ENCODE measurements at regions of chr9 and their contacts with region 1.

Region 1: GRCh38 chr9:105157130-105157583 is 87.3 kb upstream of the SLC44A1 start:
- DNase-seq: peak; percentile 46 to 78 (median 70)
- ATAC-seq: peak; percentile 83 to 95 (median 90)
- H3K4me3 ChIP-seq: no peak overlapping the region
- H3K27ac ChIP-seq: peak overlapping the region in 1 of 12 donors; percentile 43
- H3K4me1 ChIP-seq: peaks cover 0 to 16% (median 0%) of the 10 kb centered on the region in 12 donors
- H3K27me3 ChIP-seq: no peaks in the 10 kb centered on the region
- CTCF ChIP-seq: peak; percentile 30 to 72 (median 55)
- POLR2A ChIP-seq: no peak

Region 2: DNA sequence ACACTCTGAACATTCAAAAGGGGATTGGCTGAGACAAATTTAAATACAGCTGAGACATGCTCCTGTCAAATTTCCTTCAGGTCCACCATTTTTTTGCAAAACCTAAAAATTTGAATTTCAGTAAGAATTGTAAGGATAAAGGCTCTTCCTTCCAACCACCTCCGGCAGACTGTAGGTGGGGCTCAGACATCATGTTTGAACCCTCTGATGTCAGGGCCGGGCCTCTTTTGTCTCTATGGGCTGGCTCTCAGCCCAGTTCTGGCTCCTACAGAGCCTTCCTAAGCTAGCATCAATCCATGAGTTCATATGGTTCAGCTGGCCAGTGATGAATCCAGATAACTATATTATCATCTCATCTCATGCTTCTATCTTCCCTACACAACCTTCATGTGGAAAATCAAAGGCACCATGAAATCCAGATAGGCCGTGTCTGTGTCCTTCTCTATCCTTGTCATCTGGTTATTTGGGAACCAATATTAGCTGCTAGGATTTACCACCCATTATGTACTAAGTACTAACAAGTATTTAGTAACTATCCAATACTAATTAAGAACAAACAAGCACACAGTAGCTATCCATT is 349.0 kb before region 1 on chr9:
- intact Hi-C with region 1: loop called in 1 of 10 experiments (anchors 10 kb)
- DNase-seq: peak in 3 of 5 donors; percentile 27 to 45 (median 36)
- ATAC-seq: peak; percentile 29 to 75 (median 69)
- H3K4me3 ChIP-seq: no peak overlapping the region
- H3K27ac ChIP-seq: no peak overlapping the region
- H3K4me1 ChIP-seq: peaks cover 0 to 9% (median 0%) of the 10 kb centered on the region in 12 donors
- H3K27me3 ChIP-seq: no peaks in the 10 kb centered on the region
- CTCF ChIP-seq: peak in 10 of 12 donors; percentile 15 to 57 (median 40)
- POLR2A ChIP-seq: no peak

Region 3: DNA sequence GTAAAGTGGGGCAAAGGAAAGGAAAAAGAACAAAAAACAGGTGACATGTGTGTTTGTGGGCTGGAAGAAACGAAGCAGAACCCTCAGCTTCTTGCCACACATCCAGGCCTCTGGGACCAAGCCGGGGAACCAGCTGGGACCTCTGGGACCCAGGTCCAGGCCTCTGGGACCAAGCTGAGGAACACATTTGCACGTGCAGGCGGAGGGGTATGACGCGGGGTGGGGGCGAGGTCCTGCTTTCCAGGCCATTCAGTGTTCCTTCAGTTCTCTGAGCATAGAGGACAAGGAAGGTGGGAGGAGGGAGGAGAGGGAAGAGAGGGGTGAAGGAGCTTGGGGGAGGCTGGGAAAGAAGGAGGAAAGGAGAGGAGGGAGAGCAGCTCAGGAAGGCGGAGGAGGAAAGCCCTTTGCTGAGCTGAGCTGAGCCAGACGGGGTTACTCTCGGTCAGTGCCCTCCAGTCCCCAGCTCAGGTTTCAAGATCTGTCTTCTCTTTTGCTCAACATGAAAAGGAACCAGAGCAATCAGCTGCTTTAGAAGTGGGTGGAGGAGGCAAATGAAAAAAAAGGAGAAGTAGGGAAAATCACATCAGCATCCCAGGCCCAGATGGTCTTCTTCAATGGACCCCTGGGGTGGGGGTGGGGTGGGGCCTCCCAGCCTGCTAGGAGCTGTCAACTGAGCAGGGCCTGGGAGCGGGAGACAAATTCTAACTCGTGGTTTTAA is 288.3 kb before region 1 on chr9:
- intact Hi-C with region 1: loop called in 6 of 10 experiments (anchors 2 to 5 kb)
- DNase-seq: peak; percentile 67 to 79 (median 72)
- ATAC-seq: peak; percentile 89 to 93 (median 92)
- H3K4me3 ChIP-seq: no peak overlapping the region
- H3K27ac ChIP-seq: peak overlapping the region in 11 of 12 donors; percentile 36 to 81 (median 64)
- H3K4me1 ChIP-seq: peaks cover 8 to 70% (median 47%) of the 10 kb centered on the region in 12 donors
- H3K27me3 ChIP-seq: no peaks in the 10 kb centered on the region
- CTCF ChIP-seq: no peak
- POLR2A ChIP-seq: no peak

Region 4: DNA sequence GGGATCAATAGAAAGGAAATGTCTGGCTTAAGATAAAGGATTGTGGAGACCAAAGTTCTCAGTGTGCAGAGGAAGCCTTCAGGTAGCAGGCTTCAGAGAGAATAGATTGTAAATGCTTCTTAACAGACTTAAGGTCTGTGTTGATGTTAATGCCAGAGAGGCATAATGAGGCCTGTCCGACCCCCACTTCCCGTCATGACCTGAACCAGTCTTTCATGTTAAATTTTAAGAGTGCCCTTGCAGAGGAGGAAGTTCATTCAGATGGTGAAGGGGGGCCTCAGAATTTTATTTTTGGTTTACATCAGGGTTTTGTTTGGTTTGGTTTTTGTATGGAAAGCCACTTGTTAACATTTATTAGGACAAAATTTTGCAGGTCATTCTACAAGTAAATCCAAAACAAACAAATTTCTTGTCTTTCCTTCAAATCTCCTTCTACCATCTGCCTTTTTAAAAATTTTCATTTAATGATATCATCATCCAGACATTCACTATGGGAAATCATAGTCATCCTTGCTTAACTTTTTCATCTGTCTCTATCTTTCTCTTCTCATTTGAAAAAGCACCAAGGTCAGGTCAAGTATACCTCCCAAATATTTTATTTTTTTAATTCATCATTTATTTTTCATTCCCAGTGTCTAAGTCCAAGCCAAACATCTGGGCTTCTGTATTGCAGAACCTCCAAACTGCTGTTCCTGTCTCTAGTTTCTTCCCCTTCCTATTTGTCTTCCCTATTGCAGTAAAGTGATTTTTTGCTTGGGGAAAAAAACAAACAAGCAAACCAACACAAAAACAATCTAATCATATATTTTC is 222.3 kb before region 1 on chr9:
- intact Hi-C with region 1: no loop called
- DNase-seq: no peak
- ATAC-seq: peak in 1 of 4 donors; percentile 57
- H3K4me3 ChIP-seq: no peak overlapping the region
- H3K27ac ChIP-seq: peak overlapping the region in 3 of 12 donors; percentile 25 to 60 (median 39)
- H3K4me1 ChIP-seq: peaks cover 0 to 19% (median 0%) of the 10 kb centered on the region in 12 donors
- H3K27me3 ChIP-seq: no peaks in the 10 kb centered on the region
- CTCF ChIP-seq: no peak
- POLR2A ChIP-seq: no peak

Region 5: DNA sequence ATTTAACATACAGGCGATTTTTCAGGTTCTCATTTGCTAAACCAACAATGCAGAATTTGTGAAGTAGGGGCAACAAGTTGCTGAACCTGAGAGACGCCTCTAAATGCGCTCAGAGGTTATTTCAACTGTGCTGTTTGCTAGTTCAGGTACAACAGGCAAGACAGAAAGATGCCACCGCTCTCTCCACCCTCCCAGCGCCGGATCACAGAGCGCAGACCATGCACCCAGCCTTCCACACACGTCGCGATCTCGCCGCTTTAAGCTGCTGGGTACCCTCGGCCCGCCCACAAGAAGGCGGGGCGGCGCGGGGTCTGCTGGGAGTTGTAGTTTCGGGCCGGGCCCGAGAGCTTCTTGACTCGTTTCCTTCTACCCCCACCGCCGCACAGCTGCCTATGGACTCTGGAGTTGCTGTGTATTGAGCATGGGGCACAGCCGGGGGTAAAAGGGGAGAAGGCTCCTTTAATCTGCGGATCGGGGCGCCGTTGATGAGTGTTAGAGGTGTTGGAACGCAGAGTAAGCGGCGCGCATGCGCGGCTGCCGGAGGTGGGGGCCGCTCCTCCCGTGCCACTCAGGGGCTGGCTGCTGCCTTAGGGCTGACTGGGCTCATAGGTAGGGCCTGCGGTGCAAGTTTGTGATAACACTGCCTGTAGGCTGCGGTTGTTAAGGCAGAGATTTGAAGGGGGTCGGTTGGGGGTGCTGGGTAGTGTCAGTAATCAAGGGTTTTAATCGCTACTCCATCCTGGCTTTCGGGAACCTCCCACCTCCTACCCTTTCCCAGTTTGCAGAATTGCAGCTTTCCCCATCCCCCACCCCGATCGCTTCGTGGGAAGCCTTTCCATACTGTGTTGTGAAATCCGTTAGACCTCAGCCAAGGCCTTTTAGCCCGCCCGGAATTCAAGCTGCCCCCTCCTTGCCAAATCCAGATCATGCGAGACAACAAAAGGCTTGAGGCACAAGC is 188.9 kb before region 1 on chr9:
- intact Hi-C with region 1: loop called in 4 of 10 experiments (anchors 1 to 10 kb)
- DNase-seq: peak; percentile 86 to 94 (median 91)
- ATAC-seq: peak; percentile 95 to 98 (median 98)
- H3K4me3 ChIP-seq: peak overlapping the region in 11 of 12 donors; percentile 49 to 95 (median 79)
- H3K27ac ChIP-seq: peak overlapping the region; percentile 69 to 97 (median 86)
- H3K4me1 ChIP-seq: peaks cover 0 to 24% (median 8%) of the 10 kb centered on the region in 12 donors
- H3K27me3 ChIP-seq: no peaks in the 10 kb centered on the region
- CTCF ChIP-seq: peak in 1 of 12 donors; percentile 7
- POLR2A ChIP-seq: peak in 1 of 2 donors; percentile 11

Region 6: DNA sequence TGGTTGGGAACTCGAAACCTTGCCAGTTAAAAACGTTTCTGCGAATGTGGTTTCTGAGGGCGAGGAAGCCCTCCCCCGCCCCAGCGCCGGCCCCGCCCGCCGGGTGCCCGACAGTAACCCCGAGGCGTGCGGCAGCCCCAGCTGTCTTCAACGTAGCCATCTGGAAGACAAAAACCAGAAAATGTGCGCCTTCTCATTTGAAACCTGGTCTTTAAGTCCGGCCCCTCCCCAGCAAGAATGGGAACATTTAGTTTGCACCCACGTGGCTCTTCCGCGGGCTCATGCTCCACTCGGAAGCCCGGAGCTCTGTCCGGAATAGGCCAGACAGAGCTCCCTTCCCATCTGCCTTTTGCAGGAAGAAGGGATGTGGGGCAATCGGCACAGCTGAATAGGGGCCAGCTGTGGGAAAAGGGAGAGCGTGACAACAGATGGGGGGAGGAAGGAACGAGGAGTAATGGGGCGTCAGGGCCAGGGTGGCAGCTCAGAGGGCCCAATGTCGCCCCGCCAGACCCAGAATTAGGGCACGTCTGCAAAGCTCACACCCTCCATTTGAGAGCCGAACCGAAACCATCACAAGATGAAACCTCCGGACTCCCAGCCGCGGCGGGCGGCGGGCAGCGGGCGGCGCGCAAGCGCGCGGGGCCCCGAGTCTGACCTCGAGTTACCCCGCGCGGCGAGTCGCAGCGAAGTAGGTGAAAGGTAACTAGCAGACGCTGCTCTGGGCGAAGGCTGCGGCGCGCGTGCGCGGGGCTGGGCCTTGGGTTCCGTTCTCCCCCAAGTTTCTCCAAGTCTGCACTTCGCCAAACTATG is 165.8 kb before region 1 on chr9:
- intact Hi-C with region 1: loop called in 3 of 10 experiments (anchors 5 to 10 kb)
- DNase-seq: peak; percentile 88 to 96 (median 95)
- ATAC-seq: peak; percentile 75 to 91 (median 86)
- H3K4me3 ChIP-seq: peak overlapping the region; percentile 33 to 86 (median 68)
- H3K27ac ChIP-seq: peak overlapping the region; percentile 88 to 97 (median 95)
- H3K4me1 ChIP-seq: peaks cover 3 to 51% (median 36%) of the 10 kb centered on the region in 12 donors
- H3K27me3 ChIP-seq: no peaks in the 10 kb centered on the region
- CTCF ChIP-seq: no peak
- POLR2A ChIP-seq: peak in 1 of 2 donors; percentile 62

Region 7: GRCh38 chr9:105103782-105104181 is 53.4 kb before region 1 on chr9:
- intact Hi-C with region 1: no loop called
- DNase-seq: no peak
- ATAC-seq: no peak
- H3K4me3 ChIP-seq: no peak overlapping the region
- H3K27ac ChIP-seq: no peak overlapping the region
- H3K4me1 ChIP-seq: no peaks in the 10 kb centered on the region
- H3K27me3 ChIP-seq: no peaks in the 10 kb centered on the region
- CTCF ChIP-seq: no peak
- POLR2A ChIP-seq: no peak

Region 8: DNA sequence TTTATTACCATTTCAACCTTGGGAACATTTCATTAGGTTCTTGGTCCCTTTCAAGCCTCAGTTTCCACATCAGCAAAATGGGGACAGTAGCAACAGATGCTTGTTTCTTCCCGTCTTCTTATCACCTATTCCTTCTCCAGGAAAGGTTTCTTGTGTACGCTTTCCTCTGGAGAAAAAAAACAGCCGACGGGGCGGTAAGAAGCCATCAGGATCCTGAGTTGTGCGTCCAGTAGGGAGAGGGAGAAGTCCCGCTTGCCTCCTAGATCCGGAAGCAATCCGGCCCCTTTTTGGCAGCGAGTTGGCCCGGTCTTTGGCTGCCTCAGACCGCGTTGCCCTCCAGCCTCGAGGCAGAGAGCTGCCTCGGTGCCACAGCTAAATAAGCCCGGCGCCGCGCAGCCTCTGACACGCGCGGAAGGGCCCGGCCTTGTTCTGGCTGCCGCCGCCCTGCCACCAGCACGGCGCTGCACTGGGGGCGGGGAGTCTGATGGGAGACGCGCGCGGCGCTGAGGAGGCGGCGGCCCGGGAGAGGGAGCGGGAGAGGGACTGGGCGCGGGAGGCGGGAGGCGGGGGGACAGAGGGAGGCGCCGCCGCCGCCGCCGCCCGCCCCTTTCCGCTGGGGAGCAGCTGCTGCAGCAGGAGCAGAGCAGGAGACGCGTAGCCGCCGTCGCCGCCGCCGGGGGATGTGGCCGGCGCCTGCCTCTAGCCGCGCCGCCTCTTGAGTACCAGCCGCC is 87.0 kb after region 1 on chr9 and contains the start of gene SLC44A1:
- intact Hi-C with region 1: loop called in 1 of 10 experiments (anchors 2 kb)
- DNase-seq: peak; percentile 97 to 99 (median 99)
- ATAC-seq: peak; percentile 96 to 99 (median 98)
- H3K4me3 ChIP-seq: peak within 1 kb of the TSS; percentile 70 to 90 (median 82)
- H3K27ac ChIP-seq: peak within 1 kb of the TSS; percentile 73 to 89 (median 82)
- H3K4me1 ChIP-seq: peaks cover 0 to 50% (median 29%) of the 10 kb centered on the region in 12 donors
- H3K27me3 ChIP-seq: no peaks in the 10 kb centered on the region
- CTCF ChIP-seq: peak in 5 of 12 donors; percentile 10 to 33 (median 16)
- POLR2A ChIP-seq: peak in 1 of 2 donors; percentile 90
- total RNA-seq, gene SLC44A1: 14.6 to 29.4 (median 21.3) TPM